ENCODE measurements at regions of chr10 and their contacts with region 1.

Region 1: DNA sequence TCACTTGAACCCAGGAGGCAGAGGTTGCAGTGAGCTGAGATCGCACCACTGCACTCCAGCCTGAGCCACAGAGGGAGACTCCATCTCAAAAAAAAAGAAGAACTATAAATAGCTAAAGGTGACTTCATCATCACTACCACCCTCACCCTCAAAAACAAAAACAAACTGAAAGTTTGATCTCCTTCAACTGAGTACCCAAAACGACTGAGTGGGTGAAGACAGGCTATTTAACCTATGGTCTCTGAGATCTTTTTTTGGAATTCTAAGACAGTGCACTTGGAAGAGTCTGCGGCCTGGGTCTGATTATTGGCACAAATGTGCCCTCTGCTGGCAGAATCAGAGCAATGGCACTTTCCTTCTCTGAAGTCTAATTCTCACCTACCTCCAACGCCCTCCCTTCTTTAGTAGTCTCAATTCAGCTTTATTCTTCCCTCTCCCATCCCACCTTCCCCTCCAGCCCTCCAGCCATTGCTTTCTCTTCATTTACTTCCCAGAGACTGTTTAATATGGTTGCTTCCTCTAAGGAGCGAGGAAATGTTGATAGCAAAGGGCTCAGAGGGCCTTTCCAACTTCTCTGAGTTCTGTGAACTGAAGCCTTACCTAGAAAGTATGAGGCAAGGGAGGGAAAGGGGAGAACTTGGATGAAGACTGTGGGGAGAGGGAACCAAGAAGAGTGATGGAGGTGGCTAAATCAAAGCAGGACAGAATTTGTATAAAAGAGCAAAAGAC is 2.9 kb upstream of the MYOZ1 start:
- DNase-seq: peak in 8 of 9 experiments; percentile 19 to 79 (median 49)
- ATAC-seq: peak; percentile 80
- H3K4me3 ChIP-seq: no peak overlapping the region
- H3K4me3 Mint-ChIP-seq: no peak overlapping the region
- H3K27ac ChIP-seq: no peak overlapping the region
- H3K27ac Mint-ChIP-seq: no peak overlapping the region
- H3K4me1 ChIP-seq: no peaks in the 10 kb centered on the region
- H3K4me1 Mint-ChIP-seq: peaks cover 6% of the 10 kb centered on the region
- H3K27me3 ChIP-seq: peaks cover 0 to 8% of the 10 kb centered on the region in 2 experiments
- H3K27me3 Mint-ChIP-seq: peaks cover 2% of the 10 kb centered on the region
- CTCF ChIP-seq: peak; percentile 86

Region 2: DNA sequence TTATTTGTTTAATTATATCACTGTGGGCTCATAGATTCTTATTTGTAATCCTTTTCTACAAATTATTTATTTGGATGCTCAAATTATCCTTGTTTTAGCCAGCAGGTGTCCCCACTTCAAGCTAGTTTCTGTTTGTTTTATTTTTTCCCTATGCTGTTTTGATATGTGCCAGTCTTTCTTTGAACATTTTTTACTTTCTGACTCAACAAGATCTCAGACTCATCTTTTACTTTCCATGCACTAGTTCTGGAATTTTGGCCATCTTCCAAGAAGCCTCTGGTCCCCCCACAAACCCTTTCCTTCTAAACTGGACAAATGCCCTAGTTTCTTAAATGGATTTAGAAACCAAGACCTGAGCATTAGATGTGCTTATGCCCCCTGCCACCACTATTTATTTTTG is 380.2 kb before region 1 on chr10:
- CTCF ChIA-PET with region 1: no interaction called
- POLR2A ChIA-PET with region 1: no interaction called
- intact Hi-C with region 1: loop called in 1 of 2 experiments (anchors 5 kb)
- DNase-seq: peak in 2 of 9 experiments; percentile 12 to 27
- ATAC-seq: no peak
- H3K4me3 ChIP-seq: no peak overlapping the region
- H3K4me3 Mint-ChIP-seq: no peak overlapping the region
- H3K27ac ChIP-seq: no peak overlapping the region
- H3K27ac Mint-ChIP-seq: no peak overlapping the region
- H3K4me1 ChIP-seq: no peaks in the 10 kb centered on the region
- H3K4me1 Mint-ChIP-seq: no peaks in the 10 kb centered on the region
- H3K27me3 ChIP-seq: no peaks in the 10 kb centered on the region
- H3K27me3 Mint-ChIP-seq: no peaks in the 10 kb centered on the region
- CTCF ChIP-seq: peak; percentile 44

Region 3: DNA sequence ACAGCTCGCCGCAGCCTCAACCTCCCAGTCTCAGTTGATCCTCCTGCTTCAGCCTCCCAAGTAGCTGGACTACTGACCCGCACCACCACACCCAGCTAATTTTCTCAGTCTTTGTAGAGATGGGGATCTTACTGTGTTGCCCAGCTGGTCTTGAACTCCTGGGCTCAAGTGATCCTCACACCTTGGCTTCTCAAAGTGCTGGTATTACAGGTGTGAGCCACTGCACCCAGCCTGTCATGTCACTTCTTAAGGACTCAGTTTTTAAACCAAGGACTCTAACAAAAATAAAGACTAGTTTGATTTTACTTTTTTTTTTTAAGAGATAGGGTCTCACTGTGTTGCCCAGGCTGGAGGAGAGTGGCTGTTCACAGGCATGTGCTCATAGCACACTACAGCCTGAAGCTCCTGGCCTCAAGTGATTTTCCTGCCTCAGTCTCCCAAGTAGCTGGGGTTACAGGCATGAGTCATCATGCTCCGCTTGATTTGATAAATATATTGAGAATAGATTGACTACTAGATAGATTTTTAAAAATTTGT is 131.9 kb before region 1 on chr10:
- CTCF ChIA-PET with region 1: interaction called, 12 read pairs
- POLR2A ChIA-PET with region 1: no interaction called
- intact Hi-C with region 1: no loop called
- DNase-seq: no peak
- ATAC-seq: no peak
- H3K4me3 ChIP-seq: no peak overlapping the region
- H3K4me3 Mint-ChIP-seq: no peak overlapping the region
- H3K27ac ChIP-seq: no peak overlapping the region
- H3K27ac Mint-ChIP-seq: no peak overlapping the region
- H3K4me1 ChIP-seq: no peaks in the 10 kb centered on the region
- H3K4me1 Mint-ChIP-seq: no peaks in the 10 kb centered on the region
- H3K27me3 ChIP-seq: no peaks in the 10 kb centered on the region
- H3K27me3 Mint-ChIP-seq: no peaks in the 10 kb centered on the region
- CTCF ChIP-seq: no peak

Region 4: GRCh38 chr10:73517271-73517877 is 126.8 kb before region 1 on chr10:
- CTCF ChIA-PET with region 1: interaction called, 21 read pairs
- POLR2A ChIA-PET with region 1: no interaction called
- intact Hi-C with region 1: no loop called
- DNase-seq: no peak
- ATAC-seq: no peak
- H3K4me3 ChIP-seq: no peak overlapping the region
- H3K4me3 Mint-ChIP-seq: no peak overlapping the region
- H3K27ac ChIP-seq: no peak overlapping the region
- H3K27ac Mint-ChIP-seq: no peak overlapping the region
- H3K4me1 ChIP-seq: no peaks in the 10 kb centered on the region
- H3K4me1 Mint-ChIP-seq: no peaks in the 10 kb centered on the region
- H3K27me3 ChIP-seq: no peaks in the 10 kb centered on the region
- H3K27me3 Mint-ChIP-seq: no peaks in the 10 kb centered on the region
- CTCF ChIP-seq: no peak

Region 5: DNA sequence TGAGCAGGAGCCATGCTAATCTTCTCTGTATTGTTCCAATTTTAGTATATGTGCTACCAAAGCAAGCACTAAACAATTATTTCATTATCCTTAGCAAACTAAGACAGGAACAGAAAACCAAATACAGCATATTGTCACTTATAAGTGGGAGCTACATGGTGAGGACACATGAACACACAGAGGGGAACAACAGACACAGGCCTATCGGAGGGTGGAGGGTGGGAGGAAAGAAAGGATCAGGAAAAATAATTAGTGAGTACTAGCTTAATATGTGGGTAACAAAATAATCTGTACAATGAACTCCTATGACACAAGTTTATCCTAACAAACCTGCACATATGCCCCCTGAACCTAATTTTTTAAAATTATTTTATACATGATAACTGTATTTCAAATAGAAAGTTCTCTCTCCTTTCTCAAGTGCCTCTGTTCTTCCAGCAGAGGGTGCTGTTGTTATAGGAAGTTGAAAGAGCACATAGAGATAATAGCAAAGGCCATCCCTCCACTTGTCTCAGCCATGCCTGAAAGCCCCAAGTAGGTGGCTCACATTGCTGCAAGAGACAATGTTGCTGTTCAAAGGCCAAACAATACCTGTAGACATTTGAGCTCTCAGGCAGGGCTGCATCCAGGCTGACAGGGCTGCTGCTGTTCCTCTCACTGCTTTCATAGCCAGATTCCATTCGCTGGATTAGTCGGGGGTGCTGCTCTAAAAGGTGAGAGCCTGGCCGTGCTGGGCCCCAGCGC is 114.9 kb before region 1 on chr10:
- CTCF ChIA-PET with region 1: interaction called, 283 read pairs
- POLR2A ChIA-PET with region 1: no interaction called
- intact Hi-C with region 1: loop called in 1 of 2 experiments (anchors 1 kb)
- DNase-seq: peak; percentile 4 to 82 (median 43)
- ATAC-seq: peak; percentile 94
- H3K4me3 ChIP-seq: no peak overlapping the region
- H3K4me3 Mint-ChIP-seq: no peak overlapping the region
- H3K27ac ChIP-seq: no peak overlapping the region
- H3K27ac Mint-ChIP-seq: no peak overlapping the region
- H3K4me1 ChIP-seq: no peaks in the 10 kb centered on the region
- H3K4me1 Mint-ChIP-seq: no peaks in the 10 kb centered on the region
- H3K27me3 ChIP-seq: no peaks in the 10 kb centered on the region
- H3K27me3 Mint-ChIP-seq: no peaks in the 10 kb centered on the region
- CTCF ChIP-seq: peak; percentile 93

Region 6: DNA sequence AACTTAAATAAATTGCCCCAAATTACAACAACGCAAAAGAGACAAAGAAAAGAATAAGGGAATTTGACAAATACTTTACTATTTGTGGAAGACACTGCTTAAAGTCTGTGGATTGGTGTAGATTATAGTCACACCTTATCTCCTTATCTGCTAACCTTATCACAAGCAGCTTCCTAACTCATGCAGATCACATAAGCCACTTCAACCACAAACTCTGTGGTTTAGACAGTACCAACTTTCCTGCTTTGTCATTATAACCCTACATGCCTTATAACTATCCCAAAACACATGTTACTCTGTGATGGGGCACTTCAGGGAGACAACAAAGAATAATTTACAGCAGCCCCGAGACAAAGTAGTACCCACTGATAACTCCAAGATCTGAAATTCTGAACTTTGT is 106.9 kb before region 1 on chr10:
- CTCF ChIA-PET with region 1: interaction called, 283 read pairs
- POLR2A ChIA-PET with region 1: no interaction called
- intact Hi-C with region 1: no loop called
- DNase-seq: peak in 1 of 9 experiments; percentile 13
- ATAC-seq: peak; percentile 38
- H3K4me3 ChIP-seq: no peak overlapping the region
- H3K4me3 Mint-ChIP-seq: no peak overlapping the region
- H3K27ac ChIP-seq: no peak overlapping the region
- H3K27ac Mint-ChIP-seq: no peak overlapping the region
- H3K4me1 ChIP-seq: peaks cover 7% of the 10 kb centered on the region
- H3K4me1 Mint-ChIP-seq: peaks cover 11% of the 10 kb centered on the region
- H3K27me3 ChIP-seq: no peaks in the 10 kb centered on the region
- H3K27me3 Mint-ChIP-seq: no peaks in the 10 kb centered on the region
- CTCF ChIP-seq: no peak